ENCODE measurements at regions of chr10 and their contacts with region 1.

Region 1: DNA sequence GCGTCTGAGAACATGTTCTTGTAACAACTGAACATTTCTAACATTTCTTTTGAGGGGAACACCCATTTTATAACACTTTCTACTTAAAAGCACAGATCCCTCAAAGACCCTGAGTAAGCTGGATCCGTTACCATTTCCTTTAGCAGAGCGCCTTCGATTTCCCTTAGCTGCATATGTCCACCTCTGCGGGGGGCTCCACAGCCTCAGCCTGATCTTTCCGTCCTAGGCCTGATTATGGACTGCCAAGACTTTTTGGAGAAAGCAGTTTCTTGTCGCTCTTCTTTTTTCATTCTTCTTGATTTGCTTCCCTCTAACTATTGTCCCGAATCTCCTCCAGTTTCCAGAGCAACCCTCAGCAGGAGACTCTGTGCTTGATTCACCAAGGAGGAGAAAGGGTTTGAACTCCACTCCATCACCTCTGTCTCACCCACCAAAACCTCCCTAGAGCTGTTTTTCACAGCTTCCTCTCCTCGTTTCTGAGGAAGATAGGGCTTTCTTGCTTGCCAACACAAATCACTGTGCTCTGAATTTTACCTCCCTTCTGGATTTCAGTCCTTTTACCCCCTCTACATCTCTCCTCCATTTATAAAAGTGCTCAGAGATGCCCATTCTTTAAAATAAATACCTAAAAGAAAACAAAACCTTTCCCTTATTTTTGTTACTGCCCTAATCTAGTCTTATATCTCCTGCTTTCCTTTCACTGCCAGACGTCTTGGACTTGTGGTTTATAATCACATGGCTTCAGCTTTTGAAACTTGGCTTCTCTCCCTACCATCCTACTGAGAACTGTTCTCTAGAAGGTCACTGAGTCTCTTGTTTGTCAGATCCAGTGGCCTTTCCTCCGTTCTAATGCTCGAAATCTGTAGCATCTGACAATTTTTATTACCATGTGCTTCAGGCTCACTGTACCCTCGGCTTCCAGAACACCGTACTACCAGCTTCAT is 30.5 kb upstream of the ZRANB1 start:
- DNase-seq: no peak
- ATAC-seq: peak in 3 of 4 donors; percentile 26 to 47 (median 35)
- H3K4me3 ChIP-seq: no peak overlapping the region
- H3K27ac ChIP-seq: peak overlapping the region; percentile 79
- H3K4me1 ChIP-seq: peaks cover 37% of the 10 kb centered on the region
- H3K27me3 ChIP-seq: no peaks in the 10 kb centered on the region
- CTCF ChIP-seq: no peak

Region 2: GRCh38 chr10:124522933-124523871 is 388.2 kb before region 1 on chr10:
- intact Hi-C with region 1: loop called in 1 of 2 experiments (anchors 5 kb)
- DNase-seq: peak in 1 of 2 donors; percentile 57
- ATAC-seq: no peak
- H3K4me3 ChIP-seq: peak overlapping the region; percentile 7
- H3K27ac ChIP-seq: peak overlapping the region; percentile 9
- H3K4me1 ChIP-seq: peaks cover 34% of the 10 kb centered on the region
- H3K27me3 ChIP-seq: no peaks in the 10 kb centered on the region
- CTCF ChIP-seq: no peak

Region 3: GRCh38 chr10:124864421-124865193 is 46.8 kb before region 1 on chr10:
- intact Hi-C with region 1: loop called in 1 of 2 experiments (anchors 5 kb)
- DNase-seq: peak; percentile 60 to 88
- ATAC-seq: peak; percentile 98 to 99 (median 98)
- H3K4me3 ChIP-seq: peak overlapping the region; percentile 9
- H3K27ac ChIP-seq: peak overlapping the region; percentile 83
- H3K4me1 ChIP-seq: peaks cover 13% of the 10 kb centered on the region
- H3K27me3 ChIP-seq: peaks cover 0 to 2% (median 0%) of the 10 kb centered on the region in 3 donors
- CTCF ChIP-seq: no peak